ENCODE measurements at regions of chr2 and their contacts with region 1.

Region 1: GRCh38 chr2:210299866-210300373 is 15.1 kb downstream of the MYL1 start:
- DNase-seq: no peak
- ATAC-seq: peak; percentile 60 to 64
- H3K4me3 ChIP-seq: peak overlapping the region; percentile 18 to 32 (median 28)
- H3K27ac ChIP-seq: peak overlapping the region; percentile 75 to 86 (median 84)
- H3K4me1 ChIP-seq: peaks cover 29 to 34% of the 10 kb centered on the region in 2 donors
- H3K27me3 ChIP-seq: no peaks in the 10 kb centered on the region
- CTCF ChIP-seq: no peak
- POLR2A ChIP-seq: no peak

Region 2: DNA sequence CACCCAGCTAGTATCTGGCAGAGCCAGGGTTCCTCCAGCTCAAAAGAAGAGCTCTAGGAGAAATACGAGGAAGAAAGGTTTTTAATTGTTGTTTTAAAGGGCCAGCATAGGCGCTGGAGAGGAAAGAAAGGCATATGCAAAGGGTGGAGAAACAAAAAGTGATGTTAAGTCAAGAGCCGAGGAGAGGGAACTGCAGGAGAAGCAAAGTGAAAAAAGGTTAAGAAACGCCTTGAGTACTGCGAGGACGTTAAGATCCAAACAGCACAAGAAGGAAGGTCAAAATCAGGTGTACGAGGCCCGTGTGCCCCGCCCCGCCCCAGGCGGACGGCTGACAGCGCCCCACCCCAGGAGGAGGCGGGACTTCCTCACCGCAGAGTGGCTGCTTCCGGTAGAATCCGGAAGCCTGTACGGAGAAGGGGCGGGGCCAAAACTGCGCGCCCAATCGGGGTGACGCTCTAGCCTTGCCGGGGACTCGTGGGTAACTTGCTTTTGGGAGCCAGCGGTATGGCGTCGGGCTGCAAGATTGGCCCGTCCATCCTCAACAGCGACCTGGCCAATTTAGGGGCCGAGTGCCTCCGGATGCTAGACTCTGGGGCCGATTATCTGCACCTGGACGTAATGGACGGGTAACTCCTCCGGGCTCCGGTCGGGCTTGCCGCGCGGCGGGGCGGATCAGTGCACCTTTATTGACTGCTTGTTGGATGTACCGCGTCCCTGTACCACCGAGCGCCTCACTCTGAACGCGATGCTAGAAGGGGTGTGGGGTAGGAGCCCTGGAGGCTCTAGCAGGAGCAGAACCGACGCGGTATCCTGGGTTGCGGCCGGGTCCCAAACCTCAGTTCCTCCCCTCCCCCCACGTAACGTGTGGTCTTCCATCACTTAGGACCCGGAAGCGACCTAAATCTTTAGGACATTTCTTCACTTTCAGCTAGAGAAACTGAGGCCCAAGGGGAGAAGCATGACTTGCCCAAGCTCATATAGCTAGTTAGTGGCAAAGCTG is 297.5 kb before region 1 on chr2 and contains the start of gene RPE:
- in situ Hi-C with region 1: no loop called
- intact Hi-C with region 1: loop called (anchors 10 kb)
- DNase-seq: peak; percentile 92 to 95
- ATAC-seq: peak; percentile 99
- H3K4me3 ChIP-seq: peak within 1 kb of the TSS; percentile 94 to 98 (median 95)
- H3K27ac ChIP-seq: peak within 1 kb of the TSS; percentile 79 to 91 (median 84)
- H3K4me1 ChIP-seq: peaks cover 37 to 47% of the 10 kb centered on the region in 2 donors
- H3K27me3 ChIP-seq: no peaks in the 10 kb centered on the region
- CTCF ChIP-seq: no peak
- POLR2A ChIP-seq: peak; percentile 47 to 76
- total RNA-seq, gene RPE: 9.2 to 73.5 (median 23.2) TPM

Region 3: GRCh38 chr2:210188755-210189154 is 111.2 kb before region 1 on chr2:
- in situ Hi-C with region 1: no loop called
- intact Hi-C with region 1: no loop called
- DNase-seq: no peak
- ATAC-seq: no peak
- H3K4me3 ChIP-seq: no peak overlapping the region
- H3K27ac ChIP-seq: no peak overlapping the region
- H3K4me1 ChIP-seq: no peaks in the 10 kb centered on the region
- H3K27me3 ChIP-seq: no peaks in the 10 kb centered on the region
- CTCF ChIP-seq: no peak
- POLR2A ChIP-seq: no peak